HEK293 (cell line): ENCODE measurements at regions of chr22 and their contacts with region 1.

Region 1: GRCh38 chr22:46122511-46122971 is 27.8 kb upstream of the PPARA start:
- H3K4me3 ChIP-seq: no peak overlapping the region
- H3K27ac ChIP-seq: no peak overlapping the region
- H3K4me1 ChIP-seq: no peaks in the 10 kb centered on the region; the same call in 1 of the 2 replicates
- CTCF ChIP-seq: peak; percentile 95

Region 2: DNA sequence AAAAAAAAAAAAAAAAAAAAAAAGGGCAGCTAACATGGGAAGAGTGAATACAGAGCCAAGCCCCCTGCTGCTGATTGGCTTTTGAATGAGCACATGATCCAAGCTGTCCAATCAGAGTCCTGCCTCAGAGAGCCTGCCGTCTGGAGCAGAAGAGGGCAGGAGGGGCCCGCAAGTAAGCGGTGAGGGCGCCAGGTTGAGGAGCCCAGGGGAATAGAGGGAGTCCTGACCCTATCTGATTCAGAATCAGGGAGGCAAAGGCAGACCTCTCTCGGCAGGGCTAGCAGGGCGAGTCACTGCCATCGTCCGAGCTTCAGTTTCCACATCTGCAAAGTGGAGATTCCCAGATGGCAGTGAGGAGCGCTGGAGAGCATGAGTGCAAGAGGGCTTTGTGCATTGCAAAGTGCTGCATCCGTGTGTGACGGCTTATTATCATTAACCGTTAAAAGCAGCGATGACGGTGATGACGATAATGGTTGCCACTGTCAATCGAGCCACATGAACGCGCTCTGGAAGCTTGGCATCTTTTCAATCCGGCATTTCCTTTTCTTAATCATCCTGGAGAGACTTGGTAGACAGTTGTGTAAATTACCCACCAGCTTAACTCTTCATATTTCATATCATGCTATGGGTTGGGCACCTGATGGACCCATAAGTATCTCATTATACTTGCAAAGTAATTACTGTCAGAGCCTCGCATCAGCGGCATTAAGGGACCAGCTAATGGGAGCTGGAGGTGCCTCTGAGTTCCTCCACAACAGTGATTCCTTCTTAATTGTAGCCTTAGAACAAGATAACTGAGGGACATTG is 519.5 kb before region 1 on chr22:
- CTCF ChIA-PET with region 1: no interaction called
- POLR2A ChIA-PET with region 1: no interaction called
- H3K4me3 ChIP-seq: no peak overlapping the region
- H3K27ac ChIP-seq: no peak overlapping the region
- H3K4me1 ChIP-seq: no peaks in the 10 kb centered on the region
- CTCF ChIP-seq: no peak

Region 3: GRCh38 chr22:46267431-46268279 is 145.1 kb after region 1 on chr22 and contains the start of gene TTC38:
- CTCF ChIA-PET with region 1: interaction called, 12 read pairs
- POLR2A ChIA-PET with region 1: interaction called, 3 read pairs
- H3K4me3 ChIP-seq: peak within 1 kb of the TSS; percentile 86
- H3K27ac ChIP-seq: peak within 1 kb of the TSS; percentile 54
- H3K4me1 ChIP-seq: no peaks in the 10 kb centered on the region
- CTCF ChIP-seq: no peak

Region 4: GRCh38 chr22:46296257-46297150 is 174.0 kb after region 1 on chr22 and contains the start of gene GTSE1:
- CTCF ChIA-PET with region 1: interaction called, 16 read pairs
- POLR2A ChIA-PET with region 1: interaction called, 4 read pairs
- H3K4me3 ChIP-seq: peak within 1 kb of the TSS; percentile 94
- H3K27ac ChIP-seq: peak within 1 kb of the TSS; percentile 81
- H3K4me1 ChIP-seq: peaks cover 8% of the 10 kb centered on the region
- CTCF ChIP-seq: peak; percentile 86

Region 5: GRCh38 chr22:46308283-46308988 is 185.9 kb after region 1 on chr22:
- CTCF ChIA-PET with region 1: interaction called, 65 read pairs
- POLR2A ChIA-PET with region 1: no interaction called
- H3K4me3 ChIP-seq: no peak overlapping the region
- H3K27ac ChIP-seq: no peak overlapping the region
- H3K4me1 ChIP-seq: no peaks in the 10 kb centered on the region
- CTCF ChIP-seq: no peak

Region 6: DNA sequence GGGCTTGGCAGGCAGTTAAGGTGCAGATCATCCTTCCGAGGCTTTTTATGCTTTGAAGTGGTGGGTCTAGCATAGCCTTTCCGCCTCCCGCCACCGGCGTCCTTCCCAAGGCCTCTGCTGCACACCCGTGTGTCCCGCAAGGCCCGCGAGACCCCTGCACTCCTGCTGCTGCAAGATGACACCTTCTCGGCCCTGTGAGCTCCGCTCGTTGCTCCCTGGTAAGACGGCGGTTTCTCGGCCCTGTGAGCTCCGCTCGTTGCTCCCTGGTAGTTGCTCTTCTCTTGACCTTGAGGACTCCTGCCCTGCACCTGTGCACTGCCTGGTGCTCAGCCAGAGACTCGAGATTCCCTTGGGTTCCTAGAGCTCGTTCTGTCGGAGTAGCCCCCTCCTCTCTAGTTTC is 195.1 kb after region 1 on chr22:
- CTCF ChIA-PET with region 1: interaction called, 65 read pairs
- POLR2A ChIA-PET with region 1: no interaction called
- H3K4me3 ChIP-seq: no peak overlapping the region
- H3K27ac ChIP-seq: no peak overlapping the region
- H3K4me1 ChIP-seq: no peaks in the 10 kb centered on the region
- CTCF ChIP-seq: no peak

Region 7: GRCh38 chr22:46542011-46542985 is 419.8 kb after region 1 on chr22:
- CTCF ChIA-PET with region 1: interaction called, 18 read pairs
- POLR2A ChIA-PET with region 1: no interaction called
- H3K4me3 ChIP-seq: no peak overlapping the region
- H3K27ac ChIP-seq: no peak overlapping the region
- H3K4me1 ChIP-seq: peaks cover 5% of the 10 kb centered on the region
- CTCF ChIP-seq: peak; percentile 95